ENCODE measurements at regions of chr4 and their contacts with region 1.

Region 1: GRCh38 chr4:2241410-2242353 is at the starts of genes HAUS3 and POLN:
- DNase-seq: peak; percentile 98 to 100
- ATAC-seq: peak; percentile 97 to 99 (median 98)
- H3K4me3 ChIP-seq: peak within 1 kb of the TSS; percentile 93
- H3K27ac ChIP-seq: peak within 1 kb of the TSS; percentile 70
- H3K4me1 ChIP-seq: peaks cover 45% of the 10 kb centered on the region
- H3K27me3 ChIP-seq: no peaks in the 10 kb centered on the region
- CTCF ChIP-seq: no peak
- total RNA-seq, gene HAUS3: 4.2 to 7.4 (median 5.1) TPM
- total RNA-seq, gene POLN: 0.84 to 3.0 (median 1.8) TPM

Region 2: GRCh38 chr4:2261110-2261852 is 19.6 kb after region 1 on chr4:
- intact Hi-C with region 1: loop called in 1 of 2 experiments (anchors 2 kb)
- DNase-seq: peak; percentile 62 to 76
- ATAC-seq: peak in 3 of 4 donors; percentile 14 to 25 (median 25)
- H3K4me3 ChIP-seq: peak overlapping the region; percentile 99
- H3K27ac ChIP-seq: peak overlapping the region; percentile 94
- H3K4me1 ChIP-seq: peaks cover 66% of the 10 kb centered on the region
- H3K27me3 ChIP-seq: no peaks in the 10 kb centered on the region
- CTCF ChIP-seq: no peak

Region 3: GRCh38 chr4:2281575-2282343 is 40.1 kb after region 1 on chr4:
- intact Hi-C with region 1: no loop called
- DNase-seq: peak in 1 of 2 donors; percentile 12
- ATAC-seq: no peak
- H3K4me3 ChIP-seq: no peak overlapping the region
- H3K27ac ChIP-seq: no peak overlapping the region
- H3K4me1 ChIP-seq: no peaks in the 10 kb centered on the region
- H3K27me3 ChIP-seq: no peaks in the 10 kb centered on the region
- CTCF ChIP-seq: no peak

Region 4: GRCh38 chr4:2418650-2419571 is 177.2 kb after region 1 on chr4 and contains the start of gene CFAP99:
- intact Hi-C with region 1: loop called in 1 of 2 experiments (anchors 5 kb)
- DNase-seq: peak; percentile 98 to 99
- ATAC-seq: peak; percentile 95 to 97 (median 97)
- H3K4me3 ChIP-seq: peak within 1 kb of the TSS; percentile 75
- H3K27ac ChIP-seq: peak within 1 kb of the TSS; percentile 71
- H3K4me1 ChIP-seq: peaks cover 24% of the 10 kb centered on the region
- H3K27me3 ChIP-seq: no peaks in the 10 kb centered on the region
- CTCF ChIP-seq: peak; percentile 13
- total RNA-seq, gene CFAP99: not detected

Measured in psoas muscle (tissue), 8 donors.